MCF 10A (cell line): ENCODE measurements at regions of chr20 and their contacts with region 1.

Region 1: DNA sequence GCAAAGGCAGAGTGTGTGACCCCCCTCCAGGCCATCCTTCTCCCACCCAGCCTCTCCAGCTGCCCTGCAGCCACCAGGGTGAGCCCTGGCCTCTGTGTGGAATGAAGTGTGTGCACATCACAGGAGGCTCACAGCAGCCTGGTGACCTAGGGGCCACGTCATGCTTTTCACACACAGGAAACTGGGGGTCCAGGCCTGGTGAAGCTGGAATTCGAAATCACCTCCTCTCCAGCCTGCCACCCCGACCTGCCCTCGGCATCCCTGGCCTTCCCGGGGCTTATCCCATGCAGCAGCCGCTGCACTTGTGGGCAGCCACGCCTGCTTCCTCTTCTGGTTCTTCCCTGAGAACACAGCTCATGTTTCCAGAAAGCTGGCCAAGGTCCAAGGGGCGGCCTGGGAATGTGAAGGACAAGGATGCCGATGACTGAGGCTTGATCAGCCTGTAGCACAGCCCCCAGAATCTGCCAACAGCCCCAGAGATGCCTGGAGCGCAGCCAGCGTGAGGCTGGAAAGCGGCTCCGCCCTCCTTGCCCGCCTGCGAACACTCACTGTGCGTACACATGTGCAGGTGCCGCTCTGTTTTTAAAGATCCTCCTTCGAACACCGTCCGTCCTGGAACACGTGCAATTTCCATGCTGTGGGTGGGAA is 4.2 kb upstream of the NTSR1 start:
- DNase-seq: peak; percentile 100
- H3K4me3 Mint-ChIP-seq: peak overlapping the region; percentile 39
- H3K27ac Mint-ChIP-seq: peak overlapping the region; percentile 10
- H3K4me1 Mint-ChIP-seq: peaks cover 37% of the 10 kb centered on the region
- H3K27me3 Mint-ChIP-seq: no peaks in the 10 kb centered on the region
- CTCF ChIP-seq: no peak

Region 2: DNA sequence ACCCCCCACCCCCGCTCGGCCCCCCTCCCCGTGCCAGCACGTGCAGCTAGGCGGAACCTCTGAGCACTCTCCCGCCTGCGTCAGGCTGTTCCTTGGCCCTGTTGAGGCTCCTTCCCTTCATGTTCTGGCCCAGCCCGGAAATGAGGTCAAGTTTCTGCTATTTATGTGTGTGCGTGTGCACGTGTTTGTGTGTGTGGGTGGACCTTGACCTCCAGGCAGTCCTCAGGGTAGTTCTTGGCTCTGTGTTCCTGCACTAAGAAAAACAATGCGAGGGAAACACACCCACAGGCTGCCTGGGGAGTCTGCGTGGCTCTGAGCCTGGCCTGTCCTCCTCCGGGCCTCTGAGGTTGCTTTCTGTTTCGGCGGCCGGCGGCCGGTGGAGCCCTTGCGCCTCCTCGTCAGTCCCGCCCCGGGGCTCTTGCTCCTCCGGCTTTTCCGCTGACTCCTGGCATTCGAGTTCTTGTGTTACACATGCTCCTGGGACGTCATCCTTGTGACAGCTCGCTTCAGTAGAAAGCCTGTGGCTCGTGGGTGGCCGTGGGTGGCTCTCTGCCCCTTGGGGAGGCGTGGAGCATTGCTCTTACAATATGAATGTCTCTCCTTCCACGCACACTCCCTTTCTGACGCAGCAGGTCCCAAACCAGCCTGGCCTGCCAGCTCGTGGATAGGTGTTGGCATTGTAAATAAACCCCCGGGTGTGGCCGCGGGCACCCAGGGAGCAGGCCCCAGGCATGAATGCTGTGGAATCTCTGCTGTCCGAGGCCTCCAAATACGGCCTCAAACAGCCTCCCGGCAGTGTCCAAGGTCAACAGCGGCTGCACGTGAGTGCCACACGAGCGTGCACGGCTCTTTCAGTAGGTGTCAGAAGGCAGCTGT is 52.1 kb before region 1 on chr20:
- CTCF ChIA-PET with region 1: interaction called, 7 read pairs
- POLR2A ChIA-PET with region 1: interaction called, 4 read pairs
- intact Hi-C with region 1: loop called (anchors 10 kb)
- DNase-seq: peak; percentile 99
- H3K4me3 Mint-ChIP-seq: peak overlapping the region; percentile 72
- H3K27ac Mint-ChIP-seq: peak overlapping the region; percentile 98
- H3K4me1 Mint-ChIP-seq: peaks cover 11% of the 10 kb centered on the region
- H3K27me3 Mint-ChIP-seq: no peaks in the 10 kb centered on the region
- CTCF ChIP-seq: no peak

Region 3: DNA sequence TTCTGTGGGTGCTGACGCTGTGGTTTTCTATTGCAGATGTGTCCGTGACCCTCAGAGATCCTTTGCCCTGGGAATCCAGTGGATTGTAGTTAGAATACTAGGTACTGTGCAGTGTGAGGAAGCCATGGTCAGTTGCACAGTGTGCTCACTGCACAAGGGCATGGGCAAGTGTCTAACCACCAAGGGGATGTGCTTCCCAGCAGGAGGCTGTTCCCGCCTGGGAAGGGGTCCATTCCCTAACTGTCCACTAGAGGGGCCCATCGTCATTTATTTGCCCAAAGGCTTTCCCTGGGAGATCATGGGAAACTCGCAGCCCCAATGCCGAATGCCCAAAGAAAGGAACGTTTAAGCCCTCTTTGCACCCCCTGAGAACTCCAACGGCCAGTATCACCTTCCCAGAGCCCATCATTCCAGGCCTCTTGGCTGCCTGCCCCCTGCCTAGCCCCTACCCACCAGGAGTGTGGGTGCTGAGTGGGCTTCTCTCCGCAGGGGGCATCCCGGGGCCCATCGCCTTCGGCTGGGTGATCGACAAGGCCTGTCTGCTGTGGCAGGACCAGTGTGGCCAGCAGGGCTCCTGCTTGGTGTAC is 35.9 kb before region 1 on chr20:
- CTCF ChIA-PET with region 1: interaction called, 12 read pairs
- POLR2A ChIA-PET with region 1: no interaction called
- intact Hi-C with region 1: no loop called
- DNase-seq: peak; percentile 73
- H3K4me3 Mint-ChIP-seq: no peak overlapping the region
- H3K27ac Mint-ChIP-seq: no peak overlapping the region
- H3K4me1 Mint-ChIP-seq: peaks cover 7% of the 10 kb centered on the region
- H3K27me3 Mint-ChIP-seq: no peaks in the 10 kb centered on the region
- CTCF ChIP-seq: peak; percentile 67

Region 4: DNA sequence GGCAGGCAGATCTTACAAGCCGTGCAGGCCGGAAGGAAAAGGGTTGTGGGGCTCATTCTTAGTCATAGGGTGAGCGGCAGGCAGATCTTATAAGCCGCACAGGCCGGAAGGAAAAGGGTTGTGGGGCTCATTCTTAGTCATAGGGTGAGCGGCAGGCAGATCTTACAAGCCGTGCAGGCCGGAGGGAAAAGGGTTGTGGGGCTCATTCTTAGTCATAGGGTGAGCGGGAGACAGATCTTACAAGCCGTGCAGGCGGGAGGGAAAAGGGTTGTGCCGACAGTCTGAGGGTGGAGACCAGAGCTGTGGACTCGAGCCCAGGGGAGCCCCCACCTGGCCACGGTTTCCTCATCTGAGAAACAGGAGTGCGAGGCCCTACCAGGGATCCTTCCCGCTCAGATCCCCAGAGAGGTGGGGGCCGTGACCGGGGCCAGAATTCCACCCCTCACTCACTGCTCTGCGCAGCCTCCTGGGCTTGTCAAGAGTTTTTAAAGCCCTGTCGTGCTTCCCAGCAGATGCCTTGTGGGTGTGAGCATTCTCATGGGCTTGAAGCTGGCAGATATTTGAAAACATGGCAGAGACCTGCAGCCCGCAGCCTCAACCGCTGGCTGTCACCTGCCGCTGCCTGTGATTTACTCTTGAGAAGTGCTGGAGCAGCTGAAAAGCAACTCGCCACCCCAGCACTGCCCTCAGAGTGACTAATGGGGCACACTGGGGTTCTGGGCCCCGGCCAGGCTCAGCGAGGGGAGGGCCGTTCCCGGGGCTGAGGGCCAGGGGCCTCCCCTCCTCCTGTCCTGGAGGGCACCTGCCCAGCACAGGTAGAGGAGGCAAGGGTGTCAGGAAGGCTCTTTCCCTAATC is 36.1 kb after region 1 on chr20:
- CTCF ChIA-PET with region 1: interaction called, 4 read pairs
- POLR2A ChIA-PET with region 1: interaction called, 19 read pairs
- intact Hi-C with region 1: loop called (anchors 1 kb)
- DNase-seq: peak; percentile 96
- H3K4me3 Mint-ChIP-seq: peak overlapping the region; percentile 71
- H3K27ac Mint-ChIP-seq: peak overlapping the region; percentile 67
- H3K4me1 Mint-ChIP-seq: peaks cover 20% of the 10 kb centered on the region
- H3K27me3 Mint-ChIP-seq: no peaks in the 10 kb centered on the region
- CTCF ChIP-seq: no peak

Region 5: GRCh38 chr20:62772990-62773844 is 68.8 kb after region 1 on chr20:
- CTCF ChIA-PET with region 1: interaction called, 15 read pairs
- POLR2A ChIA-PET with region 1: interaction called, 25 read pairs
- intact Hi-C with region 1: no loop called
- DNase-seq: peak; percentile 96
- H3K4me3 Mint-ChIP-seq: peak overlapping the region; percentile 58
- H3K27ac Mint-ChIP-seq: peak overlapping the region; percentile 84
- H3K4me1 Mint-ChIP-seq: peaks cover 41% of the 10 kb centered on the region
- H3K27me3 Mint-ChIP-seq: no peaks in the 10 kb centered on the region
- CTCF ChIP-seq: no peak